Mammary epithelial cell (primary cell): ENCODE measurements at regions of chr20 and their contacts with region 1.

Region 1: DNA sequence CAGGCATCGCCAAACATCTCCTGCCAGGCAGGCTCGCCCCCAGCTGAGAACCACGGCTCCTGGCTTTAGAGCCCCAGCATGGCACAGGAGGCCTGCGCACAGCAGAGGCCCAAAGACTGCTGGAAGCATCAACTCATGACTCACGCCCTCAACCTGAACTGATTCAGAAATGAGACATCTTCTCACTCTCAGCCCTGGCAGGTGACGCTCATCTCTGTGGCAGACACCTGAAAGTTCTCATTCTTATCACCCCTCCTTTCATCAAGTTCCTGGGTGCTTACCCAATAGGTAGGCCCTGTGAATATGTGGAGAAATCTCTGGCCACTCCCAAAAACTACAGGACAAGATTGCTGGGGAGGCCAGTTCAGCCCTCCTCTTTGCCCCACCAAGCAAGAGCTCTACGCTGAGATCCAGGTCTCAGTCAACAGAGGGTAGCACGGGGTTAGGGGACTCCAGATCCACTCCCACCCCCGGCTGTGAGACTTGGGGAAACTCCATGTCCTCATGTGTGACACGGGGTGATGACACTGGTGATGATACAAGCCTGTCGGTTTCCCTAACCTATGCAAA is 11.3 kb downstream of the NFATC2 start:
- DNase-seq: peak; percentile 96
- H3K4me3 ChIP-seq: no peak overlapping the region
- H3K27ac ChIP-seq: peak overlapping the region; percentile 76
- H3K4me1 ChIP-seq: peaks cover 36% of the 10 kb centered on the region
- H3K27me3 ChIP-seq: no peaks in the 10 kb centered on the region
- CTCF ChIP-seq: no peak

Region 2: GRCh38 chr20:51385646-51386530 is 145.3 kb before region 1 on chr20:
- CTCF ChIA-PET with region 1: no interaction called
- dilution Hi-C with region 1: no loop called
- in situ Hi-C with region 1: no loop called
- intact Hi-C with region 1: loop called (anchors 5 kb)
- DNase-seq: peak; percentile 16
- H3K4me3 ChIP-seq: no peak overlapping the region
- H3K27ac ChIP-seq: no peak overlapping the region
- H3K4me1 ChIP-seq: no peaks in the 10 kb centered on the region
- H3K27me3 ChIP-seq: no peaks in the 10 kb centered on the region
- CTCF ChIP-seq: peak; percentile 41 to 79

Region 3: GRCh38 chr20:51543422-51543788 is 12.2 kb after region 1 on chr20:
- CTCF ChIA-PET with region 1: no interaction called
- dilution Hi-C with region 1: no loop called
- in situ Hi-C with region 1: no loop called
- intact Hi-C with region 1: no loop called
- DNase-seq: no peak
- H3K4me3 ChIP-seq: no peak overlapping the region
- H3K27ac ChIP-seq: no peak overlapping the region
- H3K4me1 ChIP-seq: no peaks in the 10 kb centered on the region
- H3K27me3 ChIP-seq: peaks cover 6% of the 10 kb centered on the region
- CTCF ChIP-seq: no peak

Region 4: GRCh38 chr20:51712501-51713197 is 181.4 kb after region 1 on chr20:
- CTCF ChIA-PET with region 1: no interaction called
- dilution Hi-C with region 1: no loop called
- in situ Hi-C with region 1: no loop called
- intact Hi-C with region 1: no loop called
- DNase-seq: no peak
- H3K4me3 ChIP-seq: no peak overlapping the region
- H3K27ac ChIP-seq: no peak overlapping the region
- H3K4me1 ChIP-seq: no peaks in the 10 kb centered on the region
- H3K27me3 ChIP-seq: no peaks in the 10 kb centered on the region
- CTCF ChIP-seq: peak; percentile 19 to 33